ENCODE measurements at regions of chr9 and their contacts with region 1.

Region 1: DNA sequence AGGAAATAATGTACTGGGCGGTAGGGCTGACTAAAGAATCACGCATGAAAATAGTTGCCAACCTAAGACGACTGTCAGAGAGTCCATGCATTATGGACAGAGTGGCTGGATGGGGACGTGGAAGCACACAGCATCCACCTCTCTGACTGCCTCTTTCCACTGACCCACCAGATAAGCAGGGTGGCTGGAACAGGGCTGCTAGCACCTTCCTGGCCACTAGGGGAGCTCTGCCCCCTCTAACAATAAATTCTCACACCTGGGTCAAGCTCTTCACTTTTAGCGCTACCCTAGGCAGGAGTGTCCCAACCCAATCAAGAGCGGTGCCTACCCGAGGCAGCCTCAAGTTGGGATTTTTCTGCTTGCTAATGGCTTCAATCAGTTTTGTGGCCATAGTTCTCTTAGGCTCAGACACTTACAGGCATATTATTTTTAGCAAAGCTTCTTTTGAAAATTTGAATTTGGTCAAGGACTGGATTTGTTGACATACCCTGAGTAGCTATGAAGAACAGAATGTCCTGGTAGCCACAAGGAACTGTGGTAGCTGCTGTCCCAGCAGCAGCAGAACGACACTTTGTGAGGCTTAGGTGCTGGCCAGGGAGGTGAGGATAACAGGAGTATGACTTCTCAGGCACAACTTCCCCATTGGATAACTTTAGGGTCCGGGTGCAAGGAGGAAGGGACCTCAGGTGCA is 6.9 kb upstream of the TPM2 start:
- DNase-seq: peak in 8 of 9 donors; percentile 15 to 56 (median 41)
- ATAC-seq: peak; percentile 91
- H3K4me3 ChIP-seq: no peak overlapping the region
- H3K4me3 Mint-ChIP-seq: no peak overlapping the region
- H3K27ac ChIP-seq: no peak overlapping the region
- H3K27ac Mint-ChIP-seq: peak overlapping the region in 8 of 9 donors; percentile 33 to 85 (median 66)
- H3K4me1 ChIP-seq: peaks cover 0 to 10% of the 10 kb centered on the region in 2 donors
- H3K4me1 Mint-ChIP-seq: peaks cover 6 to 15% (median 12%) of the 10 kb centered on the region in 7 donors
- H3K27me3 ChIP-seq: no peaks in the 10 kb centered on the region
- H3K27me3 Mint-ChIP-seq: no peaks in the 10 kb centered on the region

Region 2: DNA sequence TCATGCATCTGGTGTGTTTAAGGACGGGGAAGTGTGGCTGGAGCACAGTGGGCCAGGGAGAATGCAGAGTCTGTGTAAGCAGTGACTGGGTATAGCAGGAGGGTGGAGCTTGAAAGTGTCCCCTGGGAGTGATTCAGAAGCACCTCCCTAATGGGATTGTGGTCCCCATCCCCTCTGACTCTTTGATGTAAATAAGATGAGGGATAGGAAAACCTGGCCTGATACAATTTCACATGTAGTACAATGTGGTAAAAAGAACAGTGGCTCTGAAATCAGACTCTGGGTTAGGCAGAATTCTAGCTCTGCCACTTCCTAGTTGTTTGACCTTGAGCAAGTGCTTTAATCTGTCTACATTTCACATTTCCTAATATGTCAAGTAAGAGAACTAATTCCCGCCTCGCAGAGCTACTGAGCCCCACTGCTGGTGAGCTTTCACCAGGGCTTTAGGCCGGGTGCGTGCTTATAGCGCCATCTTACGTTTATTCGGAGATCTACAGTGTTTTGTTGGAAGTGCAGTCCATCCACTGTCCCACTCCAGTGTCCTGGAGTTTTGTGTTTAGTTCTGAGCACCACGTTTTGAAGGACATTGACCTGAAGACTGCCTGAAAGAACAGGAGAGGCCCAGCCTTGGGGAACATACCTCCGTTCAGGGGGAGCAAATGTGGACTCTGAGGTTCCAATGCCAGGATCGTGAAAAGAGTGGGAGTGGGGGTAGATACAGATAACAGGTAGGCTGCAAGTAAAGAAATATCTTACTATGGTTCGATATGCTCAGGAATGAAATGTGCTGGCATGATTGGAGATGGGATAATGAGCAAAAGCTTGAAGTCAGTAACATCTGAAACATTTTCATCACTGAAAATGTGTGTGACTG is 142.8 kb before region 1 on chr9:
- CTCF ChIA-PET with region 1: no interaction called
- POLR2A ChIA-PET with region 1: no interaction called
- intact Hi-C with region 1: no loop called
- DNase-seq: peak in 7 of 9 donors; percentile 17 to 51 (median 41)
- ATAC-seq: peak; percentile 89
- H3K4me3 ChIP-seq: no peak overlapping the region
- H3K4me3 Mint-ChIP-seq: no peak overlapping the region
- H3K27ac ChIP-seq: no peak overlapping the region
- H3K27ac Mint-ChIP-seq: no peak overlapping the region
- H3K4me1 ChIP-seq: no peaks in the 10 kb centered on the region
- H3K4me1 Mint-ChIP-seq: peaks cover 0 to 3% (median 0%) of the 10 kb centered on the region in 7 donors
- H3K27me3 ChIP-seq: no peaks in the 10 kb centered on the region
- H3K27me3 Mint-ChIP-seq: peaks cover 0 to 2% (median 0%) of the 10 kb centered on the region in 5 donors

Region 3: GRCh38 chr9:35611230-35611797 is 85.4 kb before region 1 on chr9:
- CTCF ChIA-PET with region 1: interaction called, 25 read pairs
- POLR2A ChIA-PET with region 1: interaction called, 22 read pairs
- intact Hi-C with region 1: loop called (anchors 2 kb)
- DNase-seq: peak in 6 of 9 donors; percentile 36 to 55 (median 45)
- ATAC-seq: peak; percentile 90
- H3K4me3 ChIP-seq: no peak overlapping the region
- H3K4me3 Mint-ChIP-seq: peak overlapping the region in 1 of 10 donors; percentile 6
- H3K27ac ChIP-seq: no peak overlapping the region
- H3K27ac Mint-ChIP-seq: peak overlapping the region in 3 of 9 donors; percentile 35 to 69 (median 39)
- H3K4me1 ChIP-seq: peaks cover 15 to 17% of the 10 kb centered on the region in 2 donors
- H3K4me1 Mint-ChIP-seq: peaks cover 18 to 32% (median 24%) of the 10 kb centered on the region in 7 donors
- H3K27me3 ChIP-seq: no peaks in the 10 kb centered on the region
- H3K27me3 Mint-ChIP-seq: no peaks in the 10 kb centered on the region

Region 4: GRCh38 chr9:35616681-35617459 is 79.8 kb before region 1 on chr9:
- CTCF ChIA-PET with region 1: interaction called, 25 read pairs
- POLR2A ChIA-PET with region 1: interaction called, 22 read pairs
- intact Hi-C with region 1: loop called (anchors 2 kb)
- DNase-seq: peak; percentile 46 to 71 (median 64)
- ATAC-seq: peak; percentile 80
- H3K4me3 ChIP-seq: peak overlapping the region; percentile 84
- H3K4me3 Mint-ChIP-seq: peak overlapping the region; percentile 82 to 89 (median 86)
- H3K27ac ChIP-seq: peak overlapping the region; percentile 71
- H3K27ac Mint-ChIP-seq: peak overlapping the region; percentile 84 to 93 (median 91)
- H3K4me1 ChIP-seq: peaks cover 27 to 36% of the 10 kb centered on the region in 2 donors
- H3K4me1 Mint-ChIP-seq: peaks cover 33 to 44% (median 38%) of the 10 kb centered on the region in 7 donors
- H3K27me3 ChIP-seq: no peaks in the 10 kb centered on the region
- H3K27me3 Mint-ChIP-seq: no peaks in the 10 kb centered on the region

Region 5: GRCh38 chr9:35675732-35676392 is 20.8 kb before region 1 on chr9:
- CTCF ChIA-PET with region 1: interaction called, 21 read pairs
- POLR2A ChIA-PET with region 1: interaction called, 6 read pairs
- intact Hi-C with region 1: loop called in 1 of 2 experiments (anchors 2 kb)
- DNase-seq: peak in 4 of 9 donors; percentile 12 to 41 (median 27)
- ATAC-seq: peak; percentile 74
- H3K4me3 ChIP-seq: peak overlapping the region; percentile 39
- H3K4me3 Mint-ChIP-seq: peak overlapping the region; percentile 53 to 89 (median 76)
- H3K27ac ChIP-seq: no peak overlapping the region
- H3K27ac Mint-ChIP-seq: peak overlapping the region in 3 of 9 donors; percentile 18 to 79 (median 33)
- H3K4me1 ChIP-seq: peaks cover 0 to 11% of the 10 kb centered on the region in 2 donors
- H3K4me1 Mint-ChIP-seq: peaks cover 8 to 20% (median 14%) of the 10 kb centered on the region in 7 donors
- H3K27me3 ChIP-seq: peaks cover 0 to 4% of the 10 kb centered on the region in 2 donors
- H3K27me3 Mint-ChIP-seq: peaks cover 0 to 35% (median 9%) of the 10 kb centered on the region in 5 donors

Region 6: GRCh38 chr9:35756275-35757225 is 59.9 kb after region 1 on chr9:
- CTCF ChIA-PET with region 1: interaction called, 4 read pairs
- POLR2A ChIA-PET with region 1: no interaction called
- intact Hi-C with region 1: loop called in 1 of 2 experiments (anchors 2 kb)
- DNase-seq: peak; percentile 58 to 80 (median 75)
- ATAC-seq: peak; percentile 95
- H3K4me3 ChIP-seq: peak overlapping the region; percentile 92
- H3K4me3 Mint-ChIP-seq: peak overlapping the region; percentile 89 to 100 (median 96)
- H3K27ac ChIP-seq: peak overlapping the region; percentile 82
- H3K27ac Mint-ChIP-seq: peak overlapping the region; percentile 88 to 99 (median 94)
- H3K4me1 ChIP-seq: peaks cover 6 to 9% of the 10 kb centered on the region in 2 donors
- H3K4me1 Mint-ChIP-seq: peaks cover 34 to 61% (median 52%) of the 10 kb centered on the region in 7 donors
- H3K27me3 ChIP-seq: no peaks in the 10 kb centered on the region
- H3K27me3 Mint-ChIP-seq: no peaks in the 10 kb centered on the region